ENCODE measurements at regions of chr1 and their contacts with region 1.

Region 1: GRCh38 chr1:82795508-82796149 is 994.9 kb downstream of the ADGRL2 start:
- DNase-seq: no peak
- H3K4me3 ChIP-seq: no peak overlapping the region
- H3K27ac ChIP-seq: no peak overlapping the region
- H3K4me1 ChIP-seq: peaks cover 0 to 4% (median 0%) of the 10 kb centered on the region in 4 experiments; a peak in 3 of 7 replicates
- H3K27me3 ChIP-seq: no peaks in the 10 kb centered on the region
- CTCF ChIP-seq: peak in 1 of 3 experiments; percentile 37; a peak in 1 of 4 replicates
- EP300 ChIP-seq: no peak
- POLR2A ChIP-seq: no peak
- RAD21 ChIP-seq: peak in 1 of 2 experiments; percentile 19; a peak in 2 of 4 replicates

Region 2: DNA sequence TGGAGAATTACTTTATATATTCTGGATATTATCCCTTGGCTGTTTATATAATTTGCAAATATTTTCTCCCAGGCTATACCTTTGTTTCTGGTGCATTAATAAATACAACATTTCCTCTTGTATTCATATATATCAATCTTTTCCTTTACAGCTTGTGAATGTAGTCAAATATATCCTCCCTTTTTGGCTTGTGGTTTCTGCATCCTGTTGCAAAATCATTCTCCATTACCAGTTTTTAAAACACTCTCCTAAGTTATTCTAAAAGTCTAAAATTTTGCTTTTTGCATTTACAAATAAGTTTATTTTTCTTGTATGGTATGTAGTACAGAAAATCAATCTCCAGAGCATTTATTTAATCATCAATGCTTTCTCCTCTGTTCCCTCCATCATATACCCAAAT is 85.5 kb before region 1 on chr1:
- CTCF ChIA-PET with region 1: no interaction called
- POLR2A ChIA-PET with region 1: no interaction called
- DNase-seq: no peak
- H3K4me3 ChIP-seq: no peak overlapping the region
- H3K27ac ChIP-seq: no peak overlapping the region
- H3K4me1 ChIP-seq: no peaks in the 10 kb centered on the region
- H3K27me3 ChIP-seq: no peaks in the 10 kb centered on the region
- CTCF ChIP-seq: no peak
- EP300 ChIP-seq: no peak
- POLR2A ChIP-seq: no peak
- RAD21 ChIP-seq: no peak

Region 3: DNA sequence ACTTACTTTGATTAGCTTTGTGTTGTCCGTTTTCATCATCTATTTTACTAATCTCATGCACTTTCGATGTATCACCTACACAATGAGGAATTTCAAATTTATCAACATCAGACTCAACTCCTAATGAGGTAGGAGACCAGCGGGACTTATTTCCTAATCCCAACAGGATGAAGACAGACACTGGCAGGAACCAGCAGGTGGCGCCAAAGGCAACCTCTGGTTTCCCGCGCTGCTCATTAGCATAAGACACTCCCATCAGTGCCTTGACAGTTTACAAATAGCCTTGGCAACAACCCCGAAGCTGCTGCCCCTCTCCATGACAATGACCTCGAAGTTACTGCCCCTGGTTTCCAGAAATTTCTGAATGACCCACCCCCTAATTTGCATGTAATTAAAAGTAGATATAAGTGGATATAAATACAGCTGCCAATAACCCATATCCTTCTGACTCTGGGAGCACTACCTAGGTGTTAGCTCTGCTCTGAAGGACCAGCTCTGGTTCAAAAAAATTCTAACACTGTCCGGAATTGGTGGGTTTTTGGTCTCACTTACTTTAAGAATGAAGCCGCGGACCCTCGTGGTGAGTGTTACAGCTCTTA is 20.1 kb before region 1 on chr1:
- CTCF ChIA-PET with region 1: interaction called, 12 read pairs
- POLR2A ChIA-PET with region 1: no interaction called
- DNase-seq: peak; percentile 63 to 81
- H3K4me3 ChIP-seq: no peak overlapping the region
- H3K27ac ChIP-seq: no peak overlapping the region
- H3K4me1 ChIP-seq: no peaks in the 10 kb centered on the region
- H3K27me3 ChIP-seq: no peaks in the 10 kb centered on the region
- CTCF ChIP-seq: peak; percentile 75 to 92 (median 84)
- EP300 ChIP-seq: 0 out of 3 replicates have a peak, but pooled peaks of 1 of the 2 experiments have one; percentile 16
- POLR2A ChIP-seq: no peak
- RAD21 ChIP-seq: peak; percentile 92 to 94

Region 4: DNA sequence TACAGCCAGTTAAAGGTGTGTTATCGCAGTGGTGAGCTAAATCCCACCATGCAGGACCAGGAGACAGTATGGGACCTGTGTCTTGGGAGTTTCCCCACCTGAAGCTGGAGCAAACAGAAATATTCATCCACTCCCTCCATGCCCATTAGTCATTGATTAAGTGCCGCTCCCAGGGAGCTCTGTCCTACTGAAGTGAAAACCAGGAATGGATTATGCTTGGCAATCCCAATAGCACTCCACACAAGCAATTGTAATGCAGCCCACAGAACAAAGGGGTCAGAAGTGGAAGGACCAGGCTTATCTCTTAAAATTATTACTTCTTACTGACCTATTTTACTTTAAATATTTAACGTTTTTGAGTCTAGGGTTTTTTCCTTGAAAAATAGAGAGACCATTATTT is 10.5 kb after region 1 on chr1:
- CTCF ChIA-PET with region 1: interaction called, 11 read pairs
- POLR2A ChIA-PET with region 1: no interaction called
- DNase-seq: no peak
- H3K4me3 ChIP-seq: no peak overlapping the region
- H3K27ac ChIP-seq: no peak overlapping the region
- H3K4me1 ChIP-seq: peaks cover 0 to 8% (median 2%) of the 10 kb centered on the region in 4 experiments; a peak in 2 of 7 replicates
- H3K27me3 ChIP-seq: no peaks in the 10 kb centered on the region
- CTCF ChIP-seq: no peak
- EP300 ChIP-seq: no peak
- POLR2A ChIP-seq: no peak
- RAD21 ChIP-seq: no peak

Region 5: GRCh38 chr1:82858031-82858430 is 62.4 kb after region 1 on chr1:
- CTCF ChIA-PET with region 1: no interaction called
- POLR2A ChIA-PET with region 1: no interaction called
- DNase-seq: no peak
- H3K4me3 ChIP-seq: no peak overlapping the region
- H3K27ac ChIP-seq: no peak overlapping the region
- H3K4me1 ChIP-seq: no peaks in the 10 kb centered on the region; a peak in 1 of 7 replicates
- H3K27me3 ChIP-seq: no peaks in the 10 kb centered on the region
- CTCF ChIP-seq: no peak
- EP300 ChIP-seq: no peak
- POLR2A ChIP-seq: no peak
- RAD21 ChIP-seq: no peak

Measured in H1 (cell line).